ENCODE measurements at regions of chr5 and their contacts with region 1.

Region 1: GRCh38 chr5:149667084-149667828 is 62.9 kb upstream of the PPARGC1B start:
- DNase-seq: no peak
- H3K4me3 ChIP-seq: no peak overlapping the region
- H3K27ac ChIP-seq: no peak overlapping the region
- H3K4me1 ChIP-seq: peaks cover 0 to 11% (median 3%) of the 10 kb centered on the region in 4 donors
- H3K27me3 ChIP-seq: no peaks in the 10 kb centered on the region
- CTCF ChIP-seq: peak; percentile 82 to 85 (median 85)
- EP300 ChIP-seq: no peak
- POLR2A ChIP-seq: no peak

Region 2: GRCh38 chr5:149724130-149724840 is 57.0 kb after region 1 on chr5:
- intact Hi-C with region 1: loop called (anchors 5 kb)
- DNase-seq: peak; percentile 57
- H3K4me3 ChIP-seq: no peak overlapping the region
- H3K27ac ChIP-seq: no peak overlapping the region
- H3K4me1 ChIP-seq: peaks cover 4 to 18% (median 9%) of the 10 kb centered on the region in 4 donors
- H3K27me3 ChIP-seq: no peaks in the 10 kb centered on the region
- CTCF ChIP-seq: no peak
- EP300 ChIP-seq: no peak
- POLR2A ChIP-seq: no peak

Region 3: DNA sequence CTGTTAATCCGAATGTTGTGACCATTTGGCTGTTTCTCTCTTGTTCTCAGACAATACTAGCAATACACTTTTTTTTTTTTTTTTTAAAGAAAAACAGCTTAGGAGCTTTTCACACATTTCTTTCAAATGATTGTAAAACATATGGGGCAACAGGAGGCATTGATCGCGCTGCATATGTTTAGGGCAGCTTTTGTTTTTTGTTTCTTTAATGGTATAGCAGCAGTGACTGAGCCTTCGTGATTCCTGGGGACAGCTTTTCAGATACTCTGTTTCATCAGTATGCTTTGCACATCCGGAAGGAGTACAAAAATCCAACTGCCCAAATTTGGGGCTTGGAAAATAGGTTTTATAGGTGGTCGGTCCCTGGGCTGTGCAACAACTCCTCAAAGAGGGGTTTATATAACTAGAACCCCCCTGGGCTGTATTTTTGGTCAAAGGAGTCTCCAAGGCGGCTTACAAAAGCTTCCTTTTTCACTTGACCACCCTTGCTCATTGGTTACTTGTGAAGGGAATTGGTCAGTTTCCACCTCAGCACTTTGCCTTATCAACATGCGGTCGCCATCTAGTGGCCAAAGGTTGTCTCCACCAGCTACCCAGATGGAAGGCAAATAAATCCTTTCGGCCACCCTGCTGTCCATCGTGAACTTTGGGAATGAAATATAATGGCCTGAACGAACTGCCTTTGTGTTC is 185.5 kb after region 1 on chr5:
- intact Hi-C with region 1: loop called (anchors 5 kb)
- DNase-seq: peak; percentile 95
- H3K4me3 ChIP-seq: no peak overlapping the region
- H3K27ac ChIP-seq: peak overlapping the region in 2 of 4 donors; percentile 27 to 45
- H3K4me1 ChIP-seq: peaks cover 20 to 23% (median 21%) of the 10 kb centered on the region in 4 donors
- H3K27me3 ChIP-seq: no peaks in the 10 kb centered on the region
- CTCF ChIP-seq: peak; percentile 89 to 93 (median 92)
- EP300 ChIP-seq: no peak
- POLR2A ChIP-seq: no peak